Activated T-helper 1 cell treated with anti-CD3 and anti-CD28 coated beads, Interleukin-12 subunit alpha, Interleukin-12 subunit beta, Interleukin-2, Interleukin-4 antibody, amounts not matched to agents 30 ng/mL and 10 ng/mL and 1 ng/mL, durations not matched to agents 14 hours and 24 hours and 36 hours (primary cell): ENCODE measurements at regions of chr6 and their contacts with region 1.

Region 1: DNA sequence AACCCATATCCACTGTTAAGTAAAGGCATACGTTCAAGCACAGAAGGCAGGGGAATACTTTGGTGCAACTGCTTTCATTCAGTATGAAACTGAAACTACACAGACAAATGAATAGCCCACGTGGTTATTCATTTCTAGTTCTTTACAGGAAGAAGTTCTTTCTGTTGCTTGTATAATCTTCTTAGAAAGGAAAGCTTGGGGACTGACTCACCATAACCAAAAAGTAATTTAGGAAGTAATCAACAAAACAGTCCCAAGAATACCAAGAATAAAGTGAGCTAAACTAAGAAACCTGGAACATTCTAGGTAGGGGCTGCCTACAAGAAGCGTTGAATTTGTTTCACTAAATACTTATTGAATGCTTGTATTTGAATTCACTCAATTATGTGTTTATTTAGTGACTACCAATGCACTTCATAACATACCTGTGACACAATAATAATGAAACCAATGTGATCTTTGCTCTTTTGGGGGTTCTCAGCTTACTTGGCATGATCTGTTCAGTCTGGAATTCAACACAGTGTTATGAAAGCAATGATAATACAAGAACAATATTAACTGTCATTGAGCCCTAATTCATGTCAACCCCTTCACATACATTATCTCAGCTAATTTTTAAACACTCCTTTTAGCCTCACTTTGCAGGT is 25.1 kb upstream of the KIAA0408 start:
- DNase-seq: peak; percentile 14
- H3K4me3 Mint-ChIP-seq: peak overlapping the region; percentile 73
- H3K27ac Mint-ChIP-seq: peak overlapping the region; percentile 68
- H3K4me1 Mint-ChIP-seq: peaks cover 68% of the 10 kb centered on the region
- H3K27me3 Mint-ChIP-seq: no peaks in the 10 kb centered on the region

Region 2: GRCh38 chr6:125918681-125919566 is 1565.4 kb before region 1 on chr6:
- intact Hi-C with region 1: loop called (anchors 10 kb)
- DNase-seq: peak; percentile 66
- H3K4me3 Mint-ChIP-seq: peak overlapping the region; percentile 88
- H3K27ac Mint-ChIP-seq: peak overlapping the region; percentile 94
- H3K4me1 Mint-ChIP-seq: peaks cover 58% of the 10 kb centered on the region
- H3K27me3 Mint-ChIP-seq: no peaks in the 10 kb centered on the region

Region 3: DNA sequence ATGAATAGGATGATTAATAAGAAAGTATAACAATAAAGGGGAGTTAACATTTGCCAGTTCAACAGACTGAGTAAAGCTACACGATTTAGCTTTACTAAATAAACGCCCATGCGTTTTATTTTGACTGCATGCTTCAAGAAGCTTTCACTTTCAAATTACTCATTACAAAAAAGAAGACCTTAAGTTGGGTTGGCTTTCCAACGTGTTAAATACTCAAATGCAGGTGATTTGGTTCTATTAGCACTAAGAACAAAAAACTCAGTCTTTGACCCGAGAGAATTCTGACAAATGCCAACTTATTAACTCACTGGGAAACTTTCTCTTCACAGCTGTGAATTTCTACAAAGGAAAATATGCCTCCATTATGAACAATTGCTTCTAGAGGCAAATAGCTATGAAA is 192.8 kb before region 1 on chr6:
- intact Hi-C with region 1: loop called (anchors 1 kb)
- DNase-seq: no peak
- H3K4me3 Mint-ChIP-seq: peak overlapping the region; percentile 8
- H3K27ac Mint-ChIP-seq: peak overlapping the region; percentile 77
- H3K4me1 Mint-ChIP-seq: peaks cover 32% of the 10 kb centered on the region
- H3K27me3 Mint-ChIP-seq: no peaks in the 10 kb centered on the region

Region 4: DNA sequence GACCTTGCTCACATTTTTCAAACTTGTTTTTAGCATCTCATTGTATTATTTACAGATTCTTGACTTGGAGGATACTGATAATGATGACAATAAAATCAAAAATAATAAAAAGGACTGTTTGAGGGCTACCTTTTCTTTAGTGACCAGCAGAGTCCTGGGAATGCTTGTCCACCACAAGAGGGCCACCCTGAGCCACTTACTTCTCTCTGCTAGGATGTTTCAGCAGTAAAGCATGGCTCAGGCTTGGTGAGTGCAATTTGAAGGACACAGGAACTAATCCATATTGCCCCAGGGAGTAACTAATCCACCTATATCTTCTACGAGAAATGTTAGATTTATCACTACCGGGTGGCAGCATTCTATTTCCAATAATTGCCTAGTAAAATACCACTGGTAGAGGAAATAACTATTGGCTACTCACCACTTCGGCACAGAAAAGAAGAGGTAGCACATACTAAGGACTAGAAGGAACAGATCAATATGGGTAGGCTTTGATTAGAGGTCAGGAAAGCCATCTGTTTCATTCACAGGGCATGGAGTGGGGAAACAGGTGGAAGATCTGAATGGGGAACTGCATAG is 19.4 kb before region 1 on chr6:
- intact Hi-C with region 1: loop called (anchors 2 kb)
- DNase-seq: peak; percentile 36
- H3K4me3 Mint-ChIP-seq: no peak overlapping the region
- H3K27ac Mint-ChIP-seq: no peak overlapping the region
- H3K4me1 Mint-ChIP-seq: peaks cover 9% of the 10 kb centered on the region
- H3K27me3 Mint-ChIP-seq: peaks cover under 1% of the 10 kb centered on the region

Region 5: GRCh38 chr6:127570739-127571389 is 86.5 kb after region 1 on chr6:
- intact Hi-C with region 1: loop called (anchors 1 kb)
- DNase-seq: no peak
- H3K4me3 Mint-ChIP-seq: no peak overlapping the region
- H3K27ac Mint-ChIP-seq: no peak overlapping the region
- H3K4me1 Mint-ChIP-seq: peaks cover 12% of the 10 kb centered on the region
- H3K27me3 Mint-ChIP-seq: peaks cover 6% of the 10 kb centered on the region

Region 6: GRCh38 chr6:128655978-128656498 is 1171.7 kb after region 1 on chr6:
- intact Hi-C with region 1: loop called (anchors 1 kb)
- DNase-seq: no peak
- H3K4me3 Mint-ChIP-seq: no peak overlapping the region
- H3K27ac Mint-ChIP-seq: peak overlapping the region; percentile 25
- H3K4me1 Mint-ChIP-seq: no peaks in the 10 kb centered on the region
- H3K27me3 Mint-ChIP-seq: no peaks in the 10 kb centered on the region